CD8-positive, alpha-beta T cell (primary cell): ENCODE measurements at regions of chr19 and their contacts with region 1.

Region 1: GRCh38 chr19:23758187-23759074 is at the start of gene ZNF681:
- DNase-seq: peak; percentile 67 to 93 (median 86)
- ATAC-seq: peak; percentile 85
- H3K4me3 ChIP-seq: peak within 1 kb of the TSS; percentile 82 to 95
- H3K4me3 Mint-ChIP-seq: peak within 1 kb of the TSS; percentile 95
- H3K27ac ChIP-seq: peak within 1 kb of the TSS; percentile 77 to 85
- H3K27ac Mint-ChIP-seq: peak within 1 kb of the TSS; percentile 97
- H3K4me1 ChIP-seq: peaks cover 18% of the 10 kb centered on the region
- H3K4me1 Mint-ChIP-seq: peaks cover 37% of the 10 kb centered on the region
- H3K27me3 ChIP-seq: no peaks in the 10 kb centered on the region
- H3K27me3 Mint-ChIP-seq: no peaks in the 10 kb centered on the region
- CTCF ChIP-seq: no peak
- total RNA-seq, gene ZNF681: 1.7 to 1.8 TPM

Region 2: DNA sequence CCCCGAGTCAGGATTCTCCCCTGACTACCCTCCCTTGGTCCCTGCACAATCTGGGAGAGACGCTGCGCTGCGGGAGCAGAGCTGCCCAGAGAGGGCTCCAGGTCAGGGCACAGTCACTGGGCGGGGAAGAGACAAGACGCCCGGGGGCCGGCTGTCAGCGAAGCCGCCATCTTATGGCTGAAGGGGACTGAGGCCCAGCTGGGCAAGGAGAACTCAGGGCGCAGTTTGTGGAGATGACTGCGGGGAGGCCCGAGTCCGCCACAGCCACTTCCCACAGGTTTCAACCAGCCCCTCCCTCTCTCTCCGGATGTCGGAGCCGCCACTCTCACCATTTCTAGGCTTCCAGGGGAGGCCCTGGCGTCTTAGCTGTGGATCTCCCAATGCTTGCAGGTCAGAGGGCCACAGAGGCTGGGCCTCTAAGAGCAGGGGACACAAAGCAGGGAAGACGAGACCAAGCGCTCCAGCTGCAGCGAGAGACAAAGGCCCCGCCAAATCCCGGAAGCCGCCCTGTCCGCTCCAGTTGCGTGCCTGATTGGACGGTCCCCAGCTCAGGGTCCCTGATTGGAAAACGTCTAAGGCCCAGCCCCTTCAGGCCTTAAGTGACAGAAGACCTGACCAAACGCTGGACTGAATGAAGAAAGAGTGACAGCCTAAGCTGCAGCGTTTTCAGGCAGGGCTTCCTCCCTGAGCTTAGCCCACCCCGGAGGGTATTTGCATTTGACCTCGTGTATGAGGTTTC is 508.4 kb before region 1 on chr19 and contains the start of gene ZNF724:
- CTCF ChIA-PET with region 1: no interaction called
- POLR2A ChIA-PET with region 1: interaction called, 9 read pairs
- intact Hi-C with region 1: loop called in 1 of 2 experiments (anchors 1 kb)
- DNase-seq: peak; percentile 78 to 94 (median 88)
- ATAC-seq: peak; percentile 99
- H3K4me3 ChIP-seq: peak within 1 kb of the TSS; percentile 77 to 99
- H3K4me3 Mint-ChIP-seq: peak within 1 kb of the TSS; percentile 96
- H3K27ac ChIP-seq: peak within 1 kb of the TSS; percentile 54 to 62
- H3K27ac Mint-ChIP-seq: peak within 1 kb of the TSS; percentile 81
- H3K4me1 ChIP-seq: no peaks in the 10 kb centered on the region
- H3K4me1 Mint-ChIP-seq: peaks cover 12% of the 10 kb centered on the region
- H3K27me3 ChIP-seq: no peaks in the 10 kb centered on the region
- H3K27me3 Mint-ChIP-seq: no peaks in the 10 kb centered on the region
- CTCF ChIP-seq: no peak
- total RNA-seq, gene ZNF724: 3.6 to 4.2 TPM

Region 3: GRCh38 chr19:23273590-23274413 is 484.6 kb before region 1 on chr19:
- CTCF ChIA-PET with region 1: no interaction called
- POLR2A ChIA-PET with region 1: interaction called, 3 read pairs
- intact Hi-C with region 1: loop called (anchors 5 kb)
- DNase-seq: peak; percentile 80 to 95 (median 92)
- ATAC-seq: peak; percentile 98
- H3K4me3 ChIP-seq: peak overlapping the region; percentile 80 to 95
- H3K4me3 Mint-ChIP-seq: peak overlapping the region; percentile 98
- H3K27ac ChIP-seq: peak overlapping the region; percentile 78 to 83
- H3K27ac Mint-ChIP-seq: peak overlapping the region; percentile 97
- H3K4me1 ChIP-seq: peaks cover 8% of the 10 kb centered on the region
- H3K4me1 Mint-ChIP-seq: peaks cover 35% of the 10 kb centered on the region
- H3K27me3 ChIP-seq: no peaks in the 10 kb centered on the region
- H3K27me3 Mint-ChIP-seq: no peaks in the 10 kb centered on the region
- CTCF ChIP-seq: no peak

Region 4: GRCh38 chr19:23415561-23416191 is 342.8 kb before region 1 on chr19:
- CTCF ChIA-PET with region 1: no interaction called
- POLR2A ChIA-PET with region 1: no interaction called
- intact Hi-C with region 1: no loop called
- DNase-seq: peak in 1 of 9 experiments; percentile 16
- ATAC-seq: peak; percentile 36
- H3K4me3 ChIP-seq: peak overlapping the region; percentile 33 to 55
- H3K4me3 Mint-ChIP-seq: peak overlapping the region; percentile 75
- H3K27ac ChIP-seq: no peak overlapping the region
- H3K27ac Mint-ChIP-seq: no peak overlapping the region
- H3K4me1 ChIP-seq: peaks cover 5% of the 10 kb centered on the region
- H3K4me1 Mint-ChIP-seq: peaks cover 9% of the 10 kb centered on the region
- H3K27me3 ChIP-seq: peaks cover 4 to 10% of the 10 kb centered on the region in 2 experiments
- H3K27me3 Mint-ChIP-seq: peaks cover 27% of the 10 kb centered on the region
- CTCF ChIP-seq: no peak

Region 5: GRCh38 chr19:23799321-23799720 is 40.9 kb after region 1 on chr19:
- CTCF ChIA-PET with region 1: interaction called, 5 read pairs
- POLR2A ChIA-PET with region 1: interaction called, 5 read pairs
- intact Hi-C with region 1: loop called (anchors 1 to 5 kb)
- DNase-seq: peak in 8 of 9 experiments; percentile 9 to 76 (median 46)
- ATAC-seq: peak; percentile 95
- H3K4me3 ChIP-seq: peak overlapping the region in 1 of 2 experiments; percentile 11
- H3K4me3 Mint-ChIP-seq: peak overlapping the region; percentile 81
- H3K27ac ChIP-seq: peak overlapping the region; percentile 45 to 57
- H3K27ac Mint-ChIP-seq: peak overlapping the region; percentile 88
- H3K4me1 ChIP-seq: peaks cover 24% of the 10 kb centered on the region
- H3K4me1 Mint-ChIP-seq: peaks cover 42% of the 10 kb centered on the region
- H3K27me3 ChIP-seq: no peaks in the 10 kb centered on the region
- H3K27me3 Mint-ChIP-seq: no peaks in the 10 kb centered on the region
- CTCF ChIP-seq: no peak

Region 6: GRCh38 chr19:23817519-23817918 is 59.1 kb after region 1 on chr19:
- CTCF ChIA-PET with region 1: interaction called, 6 read pairs
- POLR2A ChIA-PET with region 1: interaction called, 8 read pairs
- intact Hi-C with region 1: loop called in 1 of 2 experiments (anchors 2 kb)
- DNase-seq: peak in 7 of 9 experiments; percentile 9 to 59 (median 47)
- ATAC-seq: peak; percentile 49
- H3K4me3 ChIP-seq: no peak overlapping the region
- H3K4me3 Mint-ChIP-seq: no peak overlapping the region
- H3K27ac ChIP-seq: no peak overlapping the region
- H3K27ac Mint-ChIP-seq: no peak overlapping the region
- H3K4me1 ChIP-seq: no peaks in the 10 kb centered on the region
- H3K4me1 Mint-ChIP-seq: peaks cover 3% of the 10 kb centered on the region
- H3K27me3 ChIP-seq: no peaks in the 10 kb centered on the region
- H3K27me3 Mint-ChIP-seq: no peaks in the 10 kb centered on the region
- CTCF ChIP-seq: peak; percentile 38

Region 7: GRCh38 chr19:23914402-23915301 is 156.2 kb after region 1 on chr19 and contains the start of gene ZNF726:
- CTCF ChIA-PET with region 1: no interaction called
- POLR2A ChIA-PET with region 1: interaction called, 7 read pairs
- intact Hi-C with region 1: loop called (anchors 1 to 5 kb)
- DNase-seq: peak; percentile 74 to 94 (median 86)
- ATAC-seq: peak; percentile 98
- H3K4me3 ChIP-seq: peak within 1 kb of the TSS; percentile 56 to 72
- H3K4me3 Mint-ChIP-seq: peak within 1 kb of the TSS; percentile 94
- H3K27ac ChIP-seq: peak within 1 kb of the TSS; percentile 43 to 47
- H3K27ac Mint-ChIP-seq: peak within 1 kb of the TSS; percentile 88
- H3K4me1 ChIP-seq: peaks cover 6% of the 10 kb centered on the region
- H3K4me1 Mint-ChIP-seq: peaks cover 13% of the 10 kb centered on the region
- H3K27me3 ChIP-seq: no peaks in the 10 kb centered on the region
- H3K27me3 Mint-ChIP-seq: no peaks in the 10 kb centered on the region
- CTCF ChIP-seq: no peak
- total RNA-seq, gene ZNF726: 3.5 to 4.4 TPM

Region 8: GRCh38 chr19:24033301-24033962 is 275.0 kb after region 1 on chr19:
- CTCF ChIA-PET with region 1: no interaction called
- POLR2A ChIA-PET with region 1: interaction called, 7 read pairs
- intact Hi-C with region 1: loop called (anchors 2 kb)
- DNase-seq: peak; percentile 70 to 92 (median 84)
- ATAC-seq: peak; percentile 99
- H3K4me3 ChIP-seq: peak overlapping the region; percentile 99
- H3K4me3 Mint-ChIP-seq: peak overlapping the region; percentile 100
- H3K27ac ChIP-seq: peak overlapping the region; percentile 88 to 92
- H3K27ac Mint-ChIP-seq: peak overlapping the region; percentile 99
- H3K4me1 ChIP-seq: peaks cover 34% of the 10 kb centered on the region
- H3K4me1 Mint-ChIP-seq: peaks cover 48% of the 10 kb centered on the region
- H3K27me3 ChIP-seq: no peaks in the 10 kb centered on the region
- H3K27me3 Mint-ChIP-seq: no peaks in the 10 kb centered on the region
- CTCF ChIP-seq: no peak